CD4-positive, alpha-beta memory T cell (primary cell): ENCODE measurements at regions of chr2 and their contacts with region 1.

Region 1: GRCh38 chr2:189466660-189467059 is 25.4 kb downstream of the WDR75 start:
- DNase-seq: peak in 4 of 5 donors; percentile 13 to 24 (median 20)
- H3K4me3 ChIP-seq: no peak overlapping the region
- H3K4me3 Mint-ChIP-seq: no peak overlapping the region
- H3K27ac ChIP-seq: no peak overlapping the region
- H3K27ac Mint-ChIP-seq: peak overlapping the region in 2 of 7 donors; percentile 12 to 47
- H3K4me1 ChIP-seq: no peaks in the 10 kb centered on the region
- H3K4me1 Mint-ChIP-seq: no peaks in the 10 kb centered on the region
- H3K27me3 ChIP-seq: no peaks in the 10 kb centered on the region
- H3K27me3 Mint-ChIP-seq: no peaks in the 10 kb centered on the region

Region 2: GRCh38 chr2:189454009-189454408 is 12.7 kb before region 1 on chr2:
- CTCF ChIA-PET with region 1: no interaction called
- POLR2A ChIA-PET with region 1: no interaction called
- intact Hi-C with region 1: no loop called
- DNase-seq: no peak
- H3K4me3 ChIP-seq: no peak overlapping the region
- H3K4me3 Mint-ChIP-seq: no peak overlapping the region
- H3K27ac ChIP-seq: no peak overlapping the region
- H3K27ac Mint-ChIP-seq: peak overlapping the region in 2 of 7 donors; percentile 52 to 72
- H3K4me1 ChIP-seq: no peaks in the 10 kb centered on the region
- H3K4me1 Mint-ChIP-seq: peaks cover 0 to 4% (median 1%) of the 10 kb centered on the region in 4 donors
- H3K27me3 ChIP-seq: no peaks in the 10 kb centered on the region
- H3K27me3 Mint-ChIP-seq: no peaks in the 10 kb centered on the region

Region 3: DNA sequence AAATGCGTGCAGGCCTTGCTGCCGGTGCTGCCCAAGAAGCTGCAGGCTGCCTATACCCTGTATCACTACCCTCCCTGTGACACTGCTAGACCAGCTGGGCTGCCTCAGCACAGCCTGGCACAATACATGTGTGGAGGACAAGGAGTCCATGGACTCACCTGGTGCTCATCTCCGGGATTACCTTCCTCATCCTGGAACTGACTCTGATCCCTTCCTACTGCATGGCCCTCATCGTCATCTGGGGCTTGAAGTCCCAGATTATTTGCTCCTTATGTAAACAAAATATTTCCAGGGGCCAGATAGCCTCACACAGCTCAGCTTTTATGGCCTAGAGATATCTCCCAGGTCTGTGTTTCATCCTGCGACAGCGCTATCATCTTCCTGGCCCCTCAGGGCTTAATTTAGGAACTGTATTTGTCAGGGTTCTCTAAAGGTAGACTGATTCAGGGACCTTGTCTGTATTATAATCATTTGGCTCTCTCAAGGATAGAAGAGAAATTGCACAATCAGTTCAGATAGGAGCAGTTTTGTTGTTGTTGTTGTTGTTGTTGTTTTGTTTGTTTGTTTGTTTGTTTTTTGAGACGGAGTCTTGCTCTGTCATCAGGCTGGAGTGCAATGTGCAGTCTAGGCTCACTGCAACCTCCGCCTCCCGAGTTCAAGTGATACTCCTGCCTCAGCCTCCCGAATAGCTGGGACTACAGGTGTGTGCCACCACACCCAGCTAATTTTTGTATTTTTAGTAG is 17.5 kb after region 1 on chr2:
- CTCF ChIA-PET with region 1: no interaction called
- POLR2A ChIA-PET with region 1: no interaction called
- intact Hi-C with region 1: no loop called
- DNase-seq: no peak
- H3K4me3 ChIP-seq: no peak overlapping the region
- H3K4me3 Mint-ChIP-seq: no peak overlapping the region
- H3K27ac ChIP-seq: no peak overlapping the region
- H3K27ac Mint-ChIP-seq: no peak overlapping the region
- H3K4me1 ChIP-seq: no peaks in the 10 kb centered on the region
- H3K4me1 Mint-ChIP-seq: no peaks in the 10 kb centered on the region
- H3K27me3 ChIP-seq: no peaks in the 10 kb centered on the region
- H3K27me3 Mint-ChIP-seq: peaks cover 0 to 3% of the 10 kb centered on the region in 2 donors

Region 4: GRCh38 chr2:189633392-189633811 is 166.7 kb after region 1 on chr2:
- CTCF ChIA-PET with region 1: interaction called, 6 read pairs
- POLR2A ChIA-PET with region 1: no interaction called
- intact Hi-C with region 1: loop called (anchors 1 kb)
- DNase-seq: peak; percentile 24 to 33 (median 31)
- H3K4me3 ChIP-seq: no peak overlapping the region
- H3K4me3 Mint-ChIP-seq: no peak overlapping the region
- H3K27ac ChIP-seq: no peak overlapping the region
- H3K27ac Mint-ChIP-seq: no peak overlapping the region
- H3K4me1 ChIP-seq: no peaks in the 10 kb centered on the region
- H3K4me1 Mint-ChIP-seq: peaks cover 0 to 1% (median 0%) of the 10 kb centered on the region in 4 donors
- H3K27me3 ChIP-seq: no peaks in the 10 kb centered on the region
- H3K27me3 Mint-ChIP-seq: no peaks in the 10 kb centered on the region

Region 5: GRCh38 chr2:189783927-189784867 is 317.5 kb after region 1 on chr2 and contains the starts of genes ORMDL1 and PMS1:
- CTCF ChIA-PET with region 1: no interaction called
- POLR2A ChIA-PET with region 1: no interaction called
- intact Hi-C with region 1: no loop called
- DNase-seq: peak; percentile 93 to 96 (median 96)
- H3K4me3 ChIP-seq: peak within 1 kb of the TSS; percentile 71 to 74
- H3K4me3 Mint-ChIP-seq: peak within 1 kb of the TSS; percentile 92 to 97 (median 94)
- H3K27ac ChIP-seq: peak within 1 kb of the TSS; percentile 93
- H3K27ac Mint-ChIP-seq: peak within 1 kb of the TSS; percentile 96 to 97 (median 97)
- H3K4me1 ChIP-seq: peaks cover 52% of the 10 kb centered on the region
- H3K4me1 Mint-ChIP-seq: peaks cover 43 to 64% (median 54%) of the 10 kb centered on the region in 4 donors
- H3K27me3 ChIP-seq: no peaks in the 10 kb centered on the region
- H3K27me3 Mint-ChIP-seq: no peaks in the 10 kb centered on the region
- total RNA-seq, gene ORMDL1: 187 to 190 TPM
- total RNA-seq, gene PMS1: 29.1 to 35.1 TPM